Left cardiac atrium (tissue), 4 donors: ENCODE measurements at regions of chr12 and their contacts with region 1.

Region 1: GRCh38 chr12:11581179-11581755 is 68.2 kb upstream of the ETV6 start:
- DNase-seq: peak; percentile 66
- ATAC-seq: no peak

Region 2: GRCh38 chr12:11641522-11641921 is 60.3 kb after region 1 on chr12:
- intact Hi-C with region 1: loop called in 1 of 2 experiments (anchors 5 kb)
- DNase-seq: no peak
- ATAC-seq: no peak

Region 3: DNA sequence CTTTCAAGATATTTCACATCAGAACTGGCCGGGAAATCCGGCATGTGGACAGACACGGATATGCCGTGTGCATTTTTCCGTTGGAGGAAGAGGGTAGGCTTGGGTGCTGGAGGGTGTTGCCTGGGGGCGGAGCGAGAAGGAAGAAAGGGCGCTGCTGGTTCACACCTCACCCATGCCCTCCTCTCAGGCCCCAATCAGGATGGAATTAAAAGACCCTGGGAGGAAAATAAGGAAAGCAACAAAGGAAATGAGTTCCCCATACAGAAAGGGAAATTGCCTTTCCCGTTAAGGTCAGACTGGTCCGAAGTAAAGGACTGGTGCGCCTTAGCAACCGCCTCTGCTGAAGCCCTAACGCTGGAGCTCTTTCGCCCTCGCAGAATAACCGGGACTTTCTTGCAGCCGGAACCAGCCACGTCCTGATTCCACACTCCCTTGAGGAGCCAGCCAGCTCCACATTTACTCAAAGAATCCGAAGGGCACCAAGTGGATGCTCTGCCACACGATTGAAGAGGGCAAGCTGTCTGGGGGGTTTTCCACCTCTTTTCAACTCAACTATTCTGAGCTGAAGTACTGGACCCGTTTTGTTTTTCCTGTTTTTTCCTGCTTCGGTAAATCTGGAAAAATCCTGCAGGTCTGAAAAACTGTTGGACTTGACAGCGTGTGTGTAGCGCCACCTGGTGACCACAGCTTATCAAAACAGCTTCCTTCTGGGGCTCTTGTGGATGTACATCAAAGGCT is 451.8 kb after region 1 on chr12:
- intact Hi-C with region 1: loop called (anchors 1 to 5 kb)
- DNase-seq: peak; percentile 72
- ATAC-seq: peak; percentile 85 to 94

Region 4: GRCh38 chr12:12327802-12328201 is 746.5 kb after region 1 on chr12:
- intact Hi-C with region 1: loop called in 1 of 2 experiments (anchors 10 kb)
- DNase-seq: no peak
- ATAC-seq: peak; percentile 27 to 47